Mammary epithelial cell (primary cell): ENCODE measurements at regions of chr3 and their contacts with region 1.

Region 1: DNA sequence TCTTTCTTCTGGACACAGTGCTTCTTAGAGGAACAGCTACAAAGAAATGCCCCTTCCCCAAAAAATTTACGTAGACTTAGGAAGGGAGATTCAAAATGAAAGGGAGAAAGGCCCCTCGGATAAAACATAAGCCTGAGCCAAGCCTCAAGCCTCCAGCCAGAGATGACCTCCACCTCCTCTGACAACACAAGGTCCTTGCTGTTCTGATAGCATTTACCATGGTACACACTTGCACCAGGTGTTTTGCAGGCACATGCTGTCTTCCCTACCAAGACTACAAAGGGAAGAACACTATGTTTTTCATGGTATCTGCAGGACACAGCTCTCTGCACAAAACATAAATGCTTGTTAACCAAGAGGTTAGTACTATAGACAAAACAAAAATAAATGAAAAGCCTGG is 27.8 kb downstream of the RYK start:
- DNase-seq: no peak
- H3K4me3 ChIP-seq: no peak overlapping the region
- H3K27ac ChIP-seq: no peak overlapping the region
- H3K4me1 ChIP-seq: peaks cover 18% of the 10 kb centered on the region
- H3K27me3 ChIP-seq: no peaks in the 10 kb centered on the region
- CTCF ChIP-seq: no peak

Region 2: DNA sequence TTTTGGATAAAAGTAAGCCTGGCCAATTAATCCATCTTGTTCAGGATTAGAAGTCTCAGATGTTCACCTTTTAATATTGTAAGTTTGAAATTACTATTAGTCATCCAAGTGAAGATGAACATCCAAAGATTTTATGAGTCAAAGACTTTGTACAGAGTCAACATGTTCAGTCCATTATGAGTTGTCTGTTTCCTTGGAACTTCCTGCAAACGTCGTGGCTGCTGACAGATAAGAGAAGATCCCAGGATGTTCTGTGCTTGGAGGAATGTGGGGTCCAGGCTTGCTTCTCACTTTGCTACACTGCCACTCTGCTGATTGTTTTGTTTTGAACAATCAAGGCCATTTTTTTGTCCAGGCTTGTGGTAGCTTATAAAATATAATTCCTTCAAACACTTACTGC is 118.8 kb before region 1 on chr3:
- CTCF ChIA-PET with region 1: no interaction called
- dilution Hi-C with region 1: no loop called
- in situ Hi-C with region 1: no loop called
- intact Hi-C with region 1: no loop called
- DNase-seq: peak; percentile 19
- H3K4me3 ChIP-seq: no peak overlapping the region
- H3K27ac ChIP-seq: no peak overlapping the region
- H3K4me1 ChIP-seq: no peaks in the 10 kb centered on the region
- H3K27me3 ChIP-seq: no peaks in the 10 kb centered on the region
- CTCF ChIP-seq: no peak

Region 3: DNA sequence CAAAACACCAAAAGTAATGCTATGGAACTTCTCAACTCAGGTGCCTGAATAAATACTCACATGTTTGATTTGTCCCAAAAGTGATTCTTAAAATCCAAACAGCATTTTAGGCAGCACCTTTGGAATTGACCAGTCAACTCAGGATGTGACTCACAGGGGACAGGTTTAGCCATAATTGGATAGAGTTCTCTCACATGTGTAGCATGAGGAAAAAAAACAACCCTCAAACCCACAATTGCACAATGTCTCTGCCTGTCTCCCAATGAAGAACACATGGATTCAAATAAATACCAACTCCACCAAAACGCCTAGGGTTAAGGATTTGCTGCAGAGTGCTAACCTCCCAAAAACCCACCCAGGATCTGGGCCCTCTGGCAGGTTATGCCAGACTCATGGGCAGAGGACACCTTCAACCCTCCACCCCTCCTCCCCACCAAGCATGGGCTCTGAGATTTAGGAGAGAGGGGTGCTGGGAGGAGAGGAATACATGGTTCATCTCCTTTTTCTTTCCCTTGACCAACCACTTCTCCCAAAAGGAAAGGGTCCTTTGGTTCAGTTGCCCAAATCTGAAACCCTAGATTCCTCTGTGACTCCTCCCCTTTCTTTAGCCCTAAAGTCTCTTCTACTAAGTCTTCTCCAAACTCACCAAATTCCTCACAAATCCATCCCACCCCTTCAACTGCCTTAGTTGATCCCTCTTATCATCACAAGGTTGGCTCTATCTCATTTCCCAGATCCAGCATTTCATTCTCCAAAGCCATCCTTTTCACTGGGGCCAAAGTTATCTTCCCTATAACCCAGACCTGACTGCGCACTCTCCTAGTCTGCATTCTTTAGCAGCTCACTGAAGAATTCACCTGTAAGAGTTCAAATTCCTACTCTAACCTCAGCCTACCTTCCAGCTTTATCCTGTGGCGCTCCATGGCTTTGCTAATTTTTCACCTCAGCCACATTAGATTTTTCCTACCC is 20.1 kb after region 1 on chr3:
- CTCF ChIA-PET with region 1: interaction called, 10 read pairs
- dilution Hi-C with region 1: no loop called
- in situ Hi-C with region 1: no loop called
- intact Hi-C with region 1: no loop called
- DNase-seq: peak; percentile 90
- H3K4me3 ChIP-seq: peak overlapping the region in 1 of 3 experiments; percentile 21
- H3K27ac ChIP-seq: peak overlapping the region; percentile 47
- H3K4me1 ChIP-seq: peaks cover 59% of the 10 kb centered on the region
- H3K27me3 ChIP-seq: no peaks in the 10 kb centered on the region
- CTCF ChIP-seq: no peak

Region 4: GRCh38 chr3:135057996-135058395 is 835.2 kb after region 1 on chr3:
- CTCF ChIA-PET with region 1: no interaction called
- dilution Hi-C with region 1: no loop called
- in situ Hi-C with region 1: no loop called
- intact Hi-C with region 1: no loop called
- DNase-seq: no peak
- H3K4me3 ChIP-seq: no peak overlapping the region
- H3K27ac ChIP-seq: no peak overlapping the region
- H3K4me1 ChIP-seq: no peaks in the 10 kb centered on the region
- H3K27me3 ChIP-seq: no peaks in the 10 kb centered on the region
- CTCF ChIP-seq: no peak